ENCODE measurements at regions of chr19 and their contacts with region 1.

Region 1: DNA sequence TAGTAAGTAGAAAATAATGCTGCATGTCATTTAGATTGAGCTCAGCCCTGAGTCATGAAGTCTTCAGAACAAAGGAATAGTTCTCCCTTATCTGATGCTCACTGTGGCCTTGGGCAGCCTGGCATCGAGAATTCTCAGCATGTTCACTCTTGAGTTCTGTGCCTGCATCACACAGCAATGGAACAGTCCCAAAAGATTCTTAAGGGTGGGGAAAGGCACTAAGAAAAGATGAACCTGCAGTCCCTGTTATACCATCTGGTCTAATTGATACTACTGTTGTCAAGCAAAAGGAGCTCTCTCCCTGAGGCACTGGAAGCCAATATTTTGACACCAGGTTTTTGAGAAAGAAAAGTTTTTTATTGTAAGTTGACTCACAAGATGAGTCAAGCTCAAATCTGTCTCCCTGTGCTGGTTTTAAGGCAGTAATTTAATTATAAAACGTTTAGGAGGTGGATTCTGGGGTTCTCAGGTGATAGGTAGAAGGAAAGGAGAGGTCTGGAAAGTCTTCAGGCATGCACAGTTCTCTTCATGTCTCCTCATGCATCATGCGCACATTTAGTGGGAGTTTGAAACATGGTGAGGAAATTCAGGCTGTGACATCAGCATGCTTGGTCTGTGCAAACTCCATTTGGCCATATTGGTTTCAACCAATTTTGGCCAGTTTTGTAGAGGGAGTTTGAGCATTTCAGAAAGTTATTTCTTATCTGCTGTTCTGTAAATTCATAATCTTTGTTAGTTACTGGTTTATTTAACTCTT is 38.1 kb upstream of the ZNF766 start:
- DNase-seq: no peak
- ATAC-seq: no peak; the same call in 2 of the 3 replicates
- H3K4me3 ChIP-seq: no peak overlapping the region
- H3K27ac ChIP-seq: no peak overlapping the region
- H3K4me1 ChIP-seq: no peaks in the 10 kb centered on the region
- H3K27me3 ChIP-seq: no peaks in the 10 kb centered on the region
- CTCF ChIP-seq: no peak
- EP300 ChIP-seq: no peak
- POLR2A ChIP-seq: 0 out of 2 replicates have a peak, but pooled peaks have one; percentile 30
- RAD21 ChIP-seq: no peak

Region 2: GRCh38 chr19:52139252-52140031 is 91.9 kb before region 1 on chr19 and contains the start of gene ZNF616:
- CTCF ChIA-PET with region 1: interaction called, 52 read pairs
- POLR2A ChIA-PET with region 1: no interaction called
- RAD21 ChIA-PET with region 1: no interaction called
- SMC1A ChIA-PET with region 1: interaction called, 3 read pairs
- in situ Hi-C with region 1: loop called (anchors 5 kb)
- intact Hi-C with region 1: no loop called
- DNase-seq: peak; percentile 71
- ATAC-seq: peak; percentile 97
- H3K4me3 ChIP-seq: peak within 1 kb of the TSS; percentile 99
- H3K27ac ChIP-seq: peak within 1 kb of the TSS; percentile 84
- H3K4me1 ChIP-seq: peaks cover 5% of the 10 kb centered on the region
- H3K27me3 ChIP-seq: no peaks in the 10 kb centered on the region
- CTCF ChIP-seq: peak; percentile 67 to 88 (median 82)
- EP300 ChIP-seq: no peak
- POLR2A ChIP-seq: peak; percentile 71
- RAD21 ChIP-seq: peak; percentile 62
- polyA plus RNA-seq, gene ZNF616: 1.1 to 1.4 TPM

Region 3: GRCh38 chr19:52206481-52206880 is 24.9 kb before region 1 on chr19:
- CTCF ChIA-PET with region 1: no interaction called
- POLR2A ChIA-PET with region 1: no interaction called
- RAD21 ChIA-PET with region 1: no interaction called
- SMC1A ChIA-PET with region 1: no interaction called
- in situ Hi-C with region 1: no loop called
- intact Hi-C with region 1: no loop called
- DNase-seq: no peak
- ATAC-seq: no peak
- H3K4me3 ChIP-seq: no peak overlapping the region
- H3K27ac ChIP-seq: no peak overlapping the region
- H3K4me1 ChIP-seq: no peaks in the 10 kb centered on the region
- H3K27me3 ChIP-seq: no peaks in the 10 kb centered on the region
- CTCF ChIP-seq: no peak
- EP300 ChIP-seq: no peak
- POLR2A ChIP-seq: no peak
- RAD21 ChIP-seq: no peak

Region 4: GRCh38 chr19:52285466-52285865 is 54.1 kb after region 1 on chr19:
- CTCF ChIA-PET with region 1: no interaction called
- POLR2A ChIA-PET with region 1: no interaction called
- RAD21 ChIA-PET with region 1: no interaction called
- SMC1A ChIA-PET with region 1: no interaction called
- in situ Hi-C with region 1: no loop called
- intact Hi-C with region 1: no loop called
- DNase-seq: no peak
- ATAC-seq: no peak
- H3K4me3 ChIP-seq: no peak overlapping the region
- H3K27ac ChIP-seq: no peak overlapping the region
- H3K4me1 ChIP-seq: no peaks in the 10 kb centered on the region
- H3K27me3 ChIP-seq: no peaks in the 10 kb centered on the region
- CTCF ChIP-seq: no peak
- EP300 ChIP-seq: no peak
- POLR2A ChIP-seq: no peak
- RAD21 ChIP-seq: no peak